AG04450 (cell line): ENCODE measurements at regions of chr4 and their contacts with region 1.

Region 1: GRCh38 chr4:40897557-40898203 is 147.9 kb downstream of the NSUN7 start:
- DNase-seq: no peak
- H3K4me3 ChIP-seq: no peak overlapping the region
- H3K27ac ChIP-seq: no peak overlapping the region
- H3K27me3 ChIP-seq: no peaks in the 10 kb centered on the region
- CTCF ChIP-seq: peak; percentile 76

Region 2: GRCh38 chr4:40648742-40649281 is 248.9 kb before region 1 on chr4:
- CTCF ChIA-PET with region 1: no interaction called
- POLR2A ChIA-PET with region 1: no interaction called
- DNase-seq: no peak
- H3K4me3 ChIP-seq: no peak overlapping the region
- H3K27ac ChIP-seq: no peak overlapping the region
- H3K27me3 ChIP-seq: no peaks in the 10 kb centered on the region
- CTCF ChIP-seq: no peak

Region 3: DNA sequence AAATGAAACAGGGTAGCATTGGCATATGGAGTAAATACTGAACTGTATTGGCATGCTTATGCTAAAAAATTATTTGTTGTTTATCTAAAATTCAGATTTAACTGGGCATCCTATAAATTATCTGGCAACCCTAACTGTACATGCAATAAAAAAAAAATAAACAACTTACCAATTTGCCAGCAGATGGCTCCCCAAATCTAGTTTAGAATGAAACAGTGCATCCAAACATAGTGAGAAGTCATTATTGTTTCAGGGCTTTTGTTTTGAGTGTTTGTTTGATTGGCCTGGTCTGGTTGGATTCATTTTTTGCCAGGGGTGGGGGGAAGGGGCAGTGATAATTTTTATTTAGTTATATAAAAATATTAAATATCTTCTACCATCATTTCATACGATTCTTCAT is 160.8 kb before region 1 on chr4:
- CTCF ChIA-PET with region 1: interaction called, 37 read pairs
- POLR2A ChIA-PET with region 1: no interaction called
- DNase-seq: no peak
- H3K4me3 ChIP-seq: no peak overlapping the region
- H3K27ac ChIP-seq: no peak overlapping the region
- H3K27me3 ChIP-seq: no peaks in the 10 kb centered on the region
- CTCF ChIP-seq: peak; percentile 43

Region 4: GRCh38 chr4:40878548-40879055 is 19.1 kb before region 1 on chr4:
- CTCF ChIA-PET with region 1: interaction called, 10 read pairs
- POLR2A ChIA-PET with region 1: no interaction called
- DNase-seq: no peak
- H3K4me3 ChIP-seq: no peak overlapping the region
- H3K27ac ChIP-seq: no peak overlapping the region
- H3K27me3 ChIP-seq: peaks cover 2% of the 10 kb centered on the region
- CTCF ChIP-seq: no peak

Region 5: GRCh38 chr4:40908702-40909362 is 11.2 kb after region 1 on chr4:
- CTCF ChIA-PET with region 1: interaction called, 43 read pairs
- POLR2A ChIA-PET with region 1: no interaction called
- DNase-seq: peak; percentile 44
- H3K4me3 ChIP-seq: no peak overlapping the region
- H3K27ac ChIP-seq: peak overlapping the region; percentile 54
- H3K27me3 ChIP-seq: no peaks in the 10 kb centered on the region
- CTCF ChIP-seq: peak; percentile 91